ENCODE measurements at regions of chr13 and their contacts with region 1.

Region 1: GRCh38 chr13:100755891-100756290 is 81.3 kb upstream of the TMTC4 start:
- DNase-seq: no peak
- H3K4me3 ChIP-seq: no peak overlapping the region
- H3K27ac ChIP-seq: no peak overlapping the region
- H3K4me1 ChIP-seq: no peaks in the 10 kb centered on the region
- H3K27me3 ChIP-seq: no peaks in the 10 kb centered on the region
- CTCF ChIP-seq: no peak

Region 2: DNA sequence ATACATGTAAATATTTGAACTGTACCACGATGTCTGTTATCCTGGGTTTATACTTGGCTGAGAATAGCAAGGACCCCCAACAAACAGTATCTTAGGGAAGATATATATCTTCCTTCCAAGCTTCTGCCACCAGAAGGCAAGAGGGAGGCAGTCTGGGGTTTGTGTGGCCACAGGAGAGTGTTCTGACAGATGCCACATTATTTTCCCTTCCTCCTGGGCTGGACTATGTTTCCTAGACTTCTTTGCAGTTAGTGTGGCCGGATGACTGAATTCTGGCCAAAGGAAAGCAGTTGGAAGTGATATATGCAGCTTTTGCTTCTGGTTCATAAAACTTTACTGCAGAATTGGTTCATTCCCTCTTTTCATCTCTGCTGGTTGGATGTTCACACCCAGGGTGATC is 41.4 kb before region 1 on chr13:
- CTCF ChIA-PET with region 1: no interaction called
- dilution Hi-C with region 1: no loop called
- in situ Hi-C with region 1: no loop called
- intact Hi-C with region 1: no loop called
- DNase-seq: no peak
- H3K4me3 ChIP-seq: no peak overlapping the region
- H3K27ac ChIP-seq: no peak overlapping the region
- H3K4me1 ChIP-seq: no peaks in the 10 kb centered on the region
- H3K27me3 ChIP-seq: peaks cover 5% of the 10 kb centered on the region
- CTCF ChIP-seq: no peak

Region 3: GRCh38 chr13:100828226-100828625 is 72.3 kb after region 1 on chr13:
- CTCF ChIA-PET with region 1: interaction called, 25 read pairs
- dilution Hi-C with region 1: no loop called
- in situ Hi-C with region 1: no loop called
- intact Hi-C with region 1: no loop called
- DNase-seq: no peak
- H3K4me3 ChIP-seq: no peak overlapping the region
- H3K27ac ChIP-seq: no peak overlapping the region
- H3K4me1 ChIP-seq: no peaks in the 10 kb centered on the region
- H3K27me3 ChIP-seq: no peaks in the 10 kb centered on the region
- CTCF ChIP-seq: no peak

Measured in mammary epithelial cell (primary cell).